Sigmoid colon (tissue), 7 donors: ENCODE measurements at regions of chr11 and their contacts with region 1.

Region 1: GRCh38 chr11:114262681-114263512 is 33.3 kb upstream of the NNMT start:
- DNase-seq: peak; percentile 84
- H3K4me3 ChIP-seq: no peak overlapping the region
- H3K27ac ChIP-seq: peak overlapping the region in 1 of 4 donors; percentile 85
- H3K4me1 ChIP-seq: peaks cover 0 to 48% (median 29%) of the 10 kb centered on the region in 4 donors
- H3K27me3 ChIP-seq: no peaks in the 10 kb centered on the region
- CTCF ChIP-seq: peak; percentile 52 to 66 (median 66)
- EP300 ChIP-seq: no peak
- POLR2A ChIP-seq: no peak

Region 2: GRCh38 chr11:113896156-113896879 is 366.6 kb before region 1 on chr11:
- intact Hi-C with region 1: loop called (anchors 1 kb)
- DNase-seq: no peak
- H3K4me3 ChIP-seq: no peak overlapping the region
- H3K27ac ChIP-seq: no peak overlapping the region
- H3K4me1 ChIP-seq: no peaks in the 10 kb centered on the region
- H3K27me3 ChIP-seq: no peaks in the 10 kb centered on the region
- CTCF ChIP-seq: peak; percentile 28 to 79 (median 58)
- EP300 ChIP-seq: no peak
- POLR2A ChIP-seq: no peak

Region 3: GRCh38 chr11:113994077-113994954 is 268.6 kb before region 1 on chr11:
- intact Hi-C with region 1: loop called (anchors 1 kb)
- DNase-seq: no peak
- H3K4me3 ChIP-seq: no peak overlapping the region
- H3K27ac ChIP-seq: no peak overlapping the region
- H3K4me1 ChIP-seq: no peaks in the 10 kb centered on the region
- H3K27me3 ChIP-seq: peaks cover 0 to 32% (median 0%) of the 10 kb centered on the region in 3 donors
- CTCF ChIP-seq: peak; percentile 12 to 77 (median 41)
- EP300 ChIP-seq: no peak
- POLR2A ChIP-seq: no peak

Region 4: GRCh38 chr11:114036156-114036811 is 226.6 kb before region 1 on chr11:
- intact Hi-C with region 1: loop called (anchors 1 kb)
- DNase-seq: peak; percentile 95
- H3K4me3 ChIP-seq: peak overlapping the region; percentile 16 to 44 (median 43)
- H3K27ac ChIP-seq: peak overlapping the region; percentile 60 to 82 (median 74)
- H3K4me1 ChIP-seq: peaks cover 0 to 32% (median 25%) of the 10 kb centered on the region in 4 donors
- H3K27me3 ChIP-seq: no peaks in the 10 kb centered on the region
- CTCF ChIP-seq: peak; percentile 76 to 86 (median 83)
- EP300 ChIP-seq: no peak
- POLR2A ChIP-seq: no peak

Region 5: GRCh38 chr11:114317787-114318137 is 54.9 kb after region 1 on chr11:
- intact Hi-C with region 1: no loop called
- DNase-seq: no peak
- H3K4me3 ChIP-seq: no peak overlapping the region
- H3K27ac ChIP-seq: peak overlapping the region in 3 of 4 donors; percentile 10 to 42 (median 13)
- H3K4me1 ChIP-seq: peaks cover 0 to 10% (median 5%) of the 10 kb centered on the region in 4 donors
- H3K27me3 ChIP-seq: no peaks in the 10 kb centered on the region
- CTCF ChIP-seq: peak in 1 of 4 experiments; percentile 13
- EP300 ChIP-seq: no peak
- POLR2A ChIP-seq: no peak